ENCODE measurements at regions of chr3 and their contacts with region 1.

Region 1: GRCh38 chr3:187016639-187017345 is 86.5 kb downstream of the ST6GAL1 start:
- DNase-seq: peak; percentile 69
- H3K4me3 ChIP-seq: peak overlapping the region; percentile 42
- H3K27ac ChIP-seq: peak overlapping the region; percentile 98
- H3K4me1 ChIP-seq: peaks cover 96% of the 10 kb centered on the region
- CTCF ChIP-seq: no peak

Region 2: GRCh38 chr3:186946756-186947375 is 69.9 kb before region 1 on chr3:
- CTCF ChIA-PET with region 1: no interaction called
- POLR2A ChIA-PET with region 1: no interaction called
- intact Hi-C with region 1: loop called (anchors 2 kb)
- DNase-seq: peak; percentile 84
- H3K4me3 ChIP-seq: peak overlapping the region; percentile 44
- H3K27ac ChIP-seq: peak overlapping the region; percentile 82
- H3K4me1 ChIP-seq: peaks cover 60% of the 10 kb centered on the region
- CTCF ChIP-seq: no peak

Region 3: DNA sequence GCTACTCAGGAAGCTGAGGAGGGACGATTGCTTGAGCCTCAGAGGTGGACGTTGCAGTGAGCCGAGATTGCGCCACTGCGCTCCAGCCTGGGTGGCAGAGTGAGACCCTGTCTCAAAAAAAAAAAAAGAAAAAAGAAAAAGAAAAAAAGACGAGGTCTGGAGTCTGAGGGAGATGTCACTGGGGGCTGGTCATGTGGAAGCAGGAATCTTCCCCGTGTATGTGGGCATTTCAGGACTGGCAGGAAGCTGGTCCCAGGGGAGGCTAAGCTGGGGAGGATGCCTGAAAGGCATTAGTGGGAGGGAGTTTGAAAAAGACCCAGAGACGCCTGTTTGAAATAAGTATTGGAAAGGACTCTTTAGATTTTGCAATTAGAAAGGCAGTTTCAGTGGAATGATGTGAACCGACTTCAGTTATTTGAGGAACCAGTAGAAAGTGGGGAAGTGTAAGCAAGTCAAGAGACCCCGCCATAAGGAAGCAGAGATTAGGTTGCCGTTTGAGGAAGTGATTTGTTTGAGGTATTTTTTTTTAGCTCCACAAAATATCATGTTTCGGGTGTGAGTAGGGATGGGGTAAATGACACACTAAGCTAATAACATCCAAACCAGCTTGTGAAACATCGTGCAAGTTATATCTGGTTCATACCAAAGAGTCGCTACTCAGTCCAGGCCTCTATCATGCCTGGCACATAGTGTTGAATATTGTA is 31.0 kb before region 1 on chr3:
- CTCF ChIA-PET with region 1: interaction called, 5 read pairs
- POLR2A ChIA-PET with region 1: interaction called, 16 read pairs
- intact Hi-C with region 1: no loop called
- DNase-seq: peak; percentile 75
- H3K4me3 ChIP-seq: peak overlapping the region; percentile 54
- H3K27ac ChIP-seq: peak overlapping the region; percentile 98
- H3K4me1 ChIP-seq: peaks cover 75% of the 10 kb centered on the region
- CTCF ChIP-seq: no peak

Region 4: GRCh38 chr3:186994000-186994955 is 22.5 kb before region 1 on chr3:
- CTCF ChIA-PET with region 1: interaction called, 4 read pairs
- POLR2A ChIA-PET with region 1: interaction called, 68 read pairs
- intact Hi-C with region 1: no loop called
- DNase-seq: peak; percentile 82
- H3K4me3 ChIP-seq: peak overlapping the region; percentile 35
- H3K27ac ChIP-seq: peak overlapping the region; percentile 98
- H3K4me1 ChIP-seq: peaks cover 79% of the 10 kb centered on the region
- CTCF ChIP-seq: no peak

Region 5: DNA sequence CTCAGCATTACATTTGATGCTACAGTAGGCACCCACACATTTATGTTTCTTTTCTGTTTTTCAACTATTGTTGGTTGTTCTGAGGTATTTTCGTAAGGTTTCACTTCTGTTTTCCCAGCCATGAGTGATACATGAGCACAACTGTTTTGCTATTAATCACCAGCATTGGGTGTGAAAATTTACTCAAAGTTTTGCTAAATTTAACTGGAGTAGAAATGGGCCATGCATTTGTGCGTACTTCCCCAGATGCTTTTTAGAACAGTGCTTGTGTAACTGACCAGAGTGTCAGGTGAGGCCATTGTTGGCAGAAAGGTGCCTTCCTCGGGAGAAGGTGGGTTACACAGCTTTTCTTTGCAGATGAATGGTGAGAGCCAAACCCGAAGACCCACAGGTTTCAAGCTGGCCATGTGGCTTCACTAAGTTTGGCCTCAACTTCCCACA is 16.1 kb before region 1 on chr3:
- CTCF ChIA-PET with region 1: interaction called, 5 read pairs
- POLR2A ChIA-PET with region 1: interaction called, 68 read pairs
- intact Hi-C with region 1: loop called (anchors 1 kb)
- DNase-seq: peak; percentile 92
- H3K4me3 ChIP-seq: peak overlapping the region; percentile 77
- H3K27ac ChIP-seq: peak overlapping the region; percentile 98
- H3K4me1 ChIP-seq: peaks cover 72% of the 10 kb centered on the region
- CTCF ChIP-seq: no peak

Region 6: GRCh38 chr3:187031934-187032333 is 15.1 kb after region 1 on chr3:
- CTCF ChIA-PET with region 1: interaction called, 4 read pairs
- POLR2A ChIA-PET with region 1: interaction called, 19 read pairs
- intact Hi-C with region 1: no loop called
- DNase-seq: no peak
- H3K4me3 ChIP-seq: peak overlapping the region; percentile 42
- H3K27ac ChIP-seq: peak overlapping the region; percentile 98
- H3K4me1 ChIP-seq: peaks cover 62% of the 10 kb centered on the region
- CTCF ChIP-seq: no peak

Region 7: GRCh38 chr3:187125319-187126031 is 108.7 kb after region 1 on chr3:
- CTCF ChIA-PET with region 1: no interaction called
- POLR2A ChIA-PET with region 1: no interaction called
- intact Hi-C with region 1: no loop called
- DNase-seq: peak; percentile 89
- H3K4me3 ChIP-seq: peak overlapping the region; percentile 19
- H3K27ac ChIP-seq: peak overlapping the region; percentile 85
- H3K4me1 ChIP-seq: peaks cover 36% of the 10 kb centered on the region
- CTCF ChIP-seq: peak; percentile 68

Region 8: GRCh38 chr3:187139126-187139894 is 122.5 kb after region 1 on chr3 and contains the start of gene RPL39L:
- CTCF ChIA-PET with region 1: no interaction called
- POLR2A ChIA-PET with region 1: interaction called, 3 read pairs
- intact Hi-C with region 1: loop called (anchors 5 kb)
- DNase-seq: peak; percentile 98
- H3K4me3 ChIP-seq: peak within 1 kb of the TSS; percentile 75
- H3K27ac ChIP-seq: peak within 1 kb of the TSS; percentile 86
- H3K4me1 ChIP-seq: peaks cover 15% of the 10 kb centered on the region
- CTCF ChIP-seq: peak; percentile 99
- total RNA-seq, gene RPL39L: 79.2 and 92.2 TPM in 2 replicates